Heart left ventricle (tissue), 16 donors: ENCODE measurements at regions of chr21 and their contacts with region 1.

Region 1: GRCh38 chr21:45357436-45358260 is 47.3 kb upstream of the COL18A1 start:
- DNase-seq: peak; percentile 72 to 81 (median 74)
- ATAC-seq: peak; percentile 48 to 77 (median 74)
- H3K4me3 ChIP-seq: peak overlapping the region in 3 of 12 donors; percentile 6 to 17 (median 14)
- H3K27ac ChIP-seq: peak overlapping the region; percentile 79 to 95 (median 86)
- H3K4me1 ChIP-seq: peaks cover 0 to 60% (median 39%) of the 10 kb centered on the region in 12 donors
- H3K27me3 ChIP-seq: no peaks in the 10 kb centered on the region
- CTCF ChIP-seq: peak in 2 of 12 donors; percentile 23 to 26
- POLR2A ChIP-seq: no peak

Region 2: DNA sequence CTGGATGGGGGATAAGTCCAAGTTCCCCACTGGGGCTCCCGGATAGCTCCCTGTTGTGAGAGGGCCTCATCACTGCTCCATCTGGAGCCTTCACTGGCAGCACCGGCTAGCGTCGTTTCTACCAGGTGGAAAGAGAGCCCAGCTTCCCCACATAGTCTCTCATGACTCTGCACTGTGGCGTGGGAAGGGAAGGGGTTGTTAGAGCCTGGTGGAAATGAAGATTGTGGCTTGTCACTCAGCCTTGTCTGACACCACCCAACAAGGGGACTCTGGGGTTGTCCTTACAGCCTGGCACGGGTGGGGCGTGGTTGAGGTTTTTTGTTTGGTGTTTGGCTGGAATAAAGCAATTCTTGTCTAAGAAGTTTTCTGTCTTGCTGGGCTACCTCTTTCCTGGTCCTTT is 188.6 kb before region 1 on chr21:
- intact Hi-C with region 1: no loop called
- DNase-seq: no peak
- ATAC-seq: no peak
- H3K4me3 ChIP-seq: no peak overlapping the region
- H3K27ac ChIP-seq: no peak overlapping the region
- H3K4me1 ChIP-seq: peaks cover 0 to 25% (median 7%) of the 10 kb centered on the region in 12 donors
- H3K27me3 ChIP-seq: no peaks in the 10 kb centered on the region
- CTCF ChIP-seq: no peak
- POLR2A ChIP-seq: no peak

Region 3: DNA sequence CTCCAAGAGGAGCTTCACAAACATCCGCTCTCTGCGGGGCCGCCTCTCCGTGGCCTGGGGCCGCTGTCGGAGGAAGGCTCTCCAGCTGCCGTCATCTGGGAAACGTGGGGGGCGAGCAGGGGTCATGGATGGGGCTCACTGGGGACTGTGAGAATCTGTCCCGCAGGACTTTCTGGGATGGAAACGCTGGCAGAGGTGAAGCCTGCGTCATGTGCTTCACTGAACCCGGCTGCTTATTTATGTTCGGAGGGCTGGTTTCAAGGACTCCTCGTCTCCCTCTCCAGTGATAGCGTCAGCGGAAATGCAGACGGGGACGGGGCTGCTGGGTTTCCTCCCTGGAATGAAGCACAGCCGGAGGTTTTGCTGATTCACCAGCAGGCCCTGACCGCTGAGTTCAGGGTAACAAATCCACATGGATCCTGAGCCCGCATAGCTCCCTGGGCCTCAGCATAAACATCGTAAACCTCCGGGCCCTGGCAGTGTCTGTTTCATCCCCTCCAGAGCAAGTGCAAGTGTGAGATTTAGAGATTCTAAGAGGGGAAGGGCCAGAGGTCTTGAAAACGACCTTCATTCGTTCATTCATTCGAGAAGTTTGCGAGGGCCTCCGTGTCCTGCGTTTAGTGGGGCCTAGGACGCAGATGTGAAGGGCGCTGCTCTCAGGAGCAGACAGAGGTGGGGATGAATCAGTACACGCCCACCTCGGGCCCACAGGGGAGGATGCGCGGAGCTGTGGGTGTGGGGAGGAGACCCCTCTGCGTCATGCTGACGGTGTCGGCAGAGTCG is 62.9 kb before region 1 on chr21:
- intact Hi-C with region 1: loop called in 1 of 10 experiments (anchors 2 kb)
- DNase-seq: peak; percentile 90 to 93 (median 92)
- ATAC-seq: peak; percentile 70 to 85 (median 77)
- H3K4me3 ChIP-seq: peak overlapping the region in 2 of 12 donors; percentile 1 to 14
- H3K27ac ChIP-seq: peak overlapping the region; percentile 77 to 99 (median 94)
- H3K4me1 ChIP-seq: peaks cover 13 to 64% (median 44%) of the 10 kb centered on the region in 12 donors
- H3K27me3 ChIP-seq: no peaks in the 10 kb centered on the region
- CTCF ChIP-seq: no peak
- POLR2A ChIP-seq: peak in 1 of 2 donors; percentile 14

Region 4: GRCh38 chr21:45302078-45303055 is 55.3 kb before region 1 on chr21:
- intact Hi-C with region 1: loop called in 6 of 10 experiments (anchors 5 to 10 kb)
- DNase-seq: peak; percentile 86 to 91 (median 88)
- ATAC-seq: peak; percentile 70 to 88 (median 72)
- H3K4me3 ChIP-seq: no peak overlapping the region
- H3K27ac ChIP-seq: peak overlapping the region; percentile 58 to 98 (median 88)
- H3K4me1 ChIP-seq: peaks cover 15 to 69% (median 45%) of the 10 kb centered on the region in 12 donors
- H3K27me3 ChIP-seq: no peaks in the 10 kb centered on the region
- CTCF ChIP-seq: no peak
- POLR2A ChIP-seq: no peak

Region 5: DNA sequence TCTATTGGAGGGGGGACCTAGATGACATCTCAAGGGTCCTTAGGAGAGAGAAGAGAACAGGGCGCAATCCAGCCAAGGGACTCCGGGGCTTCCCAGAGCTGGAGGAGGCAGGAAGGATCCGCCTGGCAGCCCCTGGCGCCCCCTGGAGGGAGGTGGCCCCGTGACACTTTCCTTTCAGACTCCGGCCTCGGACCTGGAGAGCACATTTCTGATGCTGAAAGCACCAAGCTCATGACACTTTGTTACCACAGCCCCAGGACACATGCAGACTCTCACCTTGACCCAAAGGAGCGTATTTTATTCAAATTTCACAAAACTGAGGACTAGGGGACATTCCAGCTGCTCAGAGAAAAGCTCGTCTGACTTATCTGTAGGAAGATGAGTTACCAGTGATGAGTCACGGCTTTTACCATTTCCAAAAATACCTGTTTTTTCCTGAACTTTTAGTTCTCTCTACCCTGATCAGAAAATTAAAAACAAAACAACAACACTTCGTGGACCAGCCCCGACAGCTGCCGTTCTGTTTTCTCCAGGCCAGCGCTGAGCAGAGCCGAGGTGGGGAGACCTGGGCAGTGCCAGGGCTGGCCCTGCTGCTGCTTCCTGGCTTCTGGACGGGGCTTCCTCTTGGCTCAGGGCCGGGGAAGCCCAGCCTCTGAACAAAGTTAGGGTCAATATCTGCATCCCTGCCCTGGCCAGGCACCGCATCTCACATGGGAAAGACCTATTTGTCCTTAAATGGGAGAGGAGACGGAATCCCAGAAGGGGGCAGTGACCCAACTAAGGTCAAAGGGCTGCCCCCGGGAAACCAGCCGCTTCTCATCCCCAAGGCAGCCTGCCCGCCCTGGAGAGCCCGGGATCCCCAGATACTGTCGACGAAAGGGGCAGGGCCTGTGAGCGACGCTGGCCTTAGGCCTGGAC is 48.3 kb before region 1 on chr21:
- intact Hi-C with region 1: loop called in 7 of 10 experiments (anchors 2 to 10 kb)
- DNase-seq: peak; percentile 72 to 83 (median 78)
- ATAC-seq: peak; percentile 8 to 59 (median 26)
- H3K4me3 ChIP-seq: no peak overlapping the region
- H3K27ac ChIP-seq: peak overlapping the region; percentile 39 to 81 (median 63)
- H3K4me1 ChIP-seq: peaks cover 4 to 42% (median 26%) of the 10 kb centered on the region in 12 donors
- H3K27me3 ChIP-seq: no peaks in the 10 kb centered on the region
- CTCF ChIP-seq: peak; percentile 51 to 85 (median 70)
- POLR2A ChIP-seq: no peak

Region 6: GRCh38 chr21:45319461-45320211 is 38.0 kb before region 1 on chr21:
- intact Hi-C with region 1: loop called in 5 of 10 experiments (anchors 1 to 5 kb)
- DNase-seq: peak; percentile 73 to 90 (median 79)
- ATAC-seq: peak; percentile 68 to 85 (median 80)
- H3K4me3 ChIP-seq: no peak overlapping the region
- H3K27ac ChIP-seq: peak overlapping the region; percentile 74 to 92 (median 86)
- H3K4me1 ChIP-seq: peaks cover 7 to 65% (median 41%) of the 10 kb centered on the region in 12 donors
- H3K27me3 ChIP-seq: no peaks in the 10 kb centered on the region
- CTCF ChIP-seq: peak in 5 of 12 donors; percentile 15 to 39 (median 29)
- POLR2A ChIP-seq: peak in 1 of 2 donors; percentile 36

Region 7: GRCh38 chr21:45555551-45556301 is 198.1 kb after region 1 on chr21:
- intact Hi-C with region 1: no loop called
- DNase-seq: peak in 3 of 5 donors; percentile 74 to 90 (median 78)
- ATAC-seq: peak; percentile 13 to 90 (median 82)
- H3K4me3 ChIP-seq: peak overlapping the region; percentile 26 to 67 (median 52)
- H3K27ac ChIP-seq: peak overlapping the region in 8 of 12 donors; percentile 11 to 87 (median 82)
- H3K4me1 ChIP-seq: peaks cover 0 to 35% (median 4%) of the 10 kb centered on the region in 12 donors
- H3K27me3 ChIP-seq: peaks cover 0 to 10% (median 0%) of the 10 kb centered on the region in 9 donors
- CTCF ChIP-seq: peak in 8 of 12 donors; percentile 45 to 80 (median 63)
- POLR2A ChIP-seq: no peak